SK-N-SH (cell line): ENCODE measurements at regions of chr6 and their contacts with region 1.

Region 1: GRCh38 chr6:18503593-18504231 is 116.6 kb downstream of the RNF144B start:
- DNase-seq: peak; percentile 52
- H3K4me3 ChIP-seq: peak overlapping the region; percentile 9 to 19; a peak in 2 of 4 replicates
- H3K27ac ChIP-seq: no peak overlapping the region; a peak in 1 of 4 replicates
- H3K4me1 ChIP-seq: peaks cover 4 to 6% of the 10 kb centered on the region in 2 experiments; a peak in 2 of 4 replicates
- H3K27me3 ChIP-seq: no peaks in the 10 kb centered on the region
- CTCF ChIP-seq: peak; percentile 94
- EP300 ChIP-seq: no peak
- RAD21 ChIP-seq: peak; percentile 98

Region 2: DNA sequence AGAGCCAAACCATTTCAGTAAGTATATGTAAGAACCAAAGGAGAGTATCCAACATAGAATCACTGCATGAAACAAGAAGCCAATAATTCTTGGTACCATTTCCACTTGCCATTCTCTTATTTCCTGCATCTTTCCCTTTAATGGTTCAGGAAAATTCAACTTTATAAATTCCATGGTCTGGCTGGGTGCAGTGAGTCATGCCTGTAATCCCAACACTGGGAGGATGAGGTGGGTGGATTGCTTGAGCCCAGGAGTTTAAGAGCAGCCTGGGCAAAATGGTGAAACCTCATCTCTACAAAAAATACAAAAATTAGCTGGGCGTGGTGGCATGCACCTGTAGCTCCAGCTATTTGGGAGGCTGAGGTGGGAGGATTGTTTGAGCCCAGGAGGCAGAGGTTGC is 402.4 kb before region 1 on chr6:
- CTCF ChIA-PET with region 1: no interaction called
- POLR2A ChIA-PET with region 1: no interaction called
- DNase-seq: no peak
- H3K4me3 ChIP-seq: no peak overlapping the region
- H3K27ac ChIP-seq: no peak overlapping the region
- H3K4me1 ChIP-seq: no peaks in the 10 kb centered on the region
- H3K27me3 ChIP-seq: no peaks in the 10 kb centered on the region
- CTCF ChIP-seq: no peak
- EP300 ChIP-seq: no peak
- RAD21 ChIP-seq: no peak

Region 3: GRCh38 chr6:18317850-18318249 is 185.9 kb before region 1 on chr6:
- CTCF ChIA-PET with region 1: interaction called, 32 read pairs
- POLR2A ChIA-PET with region 1: no interaction called
- DNase-seq: no peak
- H3K4me3 ChIP-seq: no peak overlapping the region
- H3K27ac ChIP-seq: no peak overlapping the region
- H3K4me1 ChIP-seq: no peaks in the 10 kb centered on the region
- H3K27me3 ChIP-seq: no peaks in the 10 kb centered on the region
- CTCF ChIP-seq: no peak
- EP300 ChIP-seq: no peak
- RAD21 ChIP-seq: no peak

Region 4: GRCh38 chr6:18323935-18324705 is 179.6 kb before region 1 on chr6:
- CTCF ChIA-PET with region 1: interaction called, 32 read pairs
- POLR2A ChIA-PET with region 1: no interaction called
- DNase-seq: peak; percentile 64
- H3K4me3 ChIP-seq: no peak overlapping the region; a peak in 1 of 4 replicates
- H3K27ac ChIP-seq: no peak overlapping the region
- H3K4me1 ChIP-seq: no peaks in the 10 kb centered on the region
- H3K27me3 ChIP-seq: no peaks in the 10 kb centered on the region
- CTCF ChIP-seq: peak; percentile 81
- EP300 ChIP-seq: no peak
- RAD21 ChIP-seq: peak; percentile 77

Region 5: GRCh38 chr6:18561037-18561750 is 57.5 kb after region 1 on chr6:
- CTCF ChIA-PET with region 1: no interaction called
- POLR2A ChIA-PET with region 1: no interaction called
- DNase-seq: peak; percentile 30
- H3K4me3 ChIP-seq: no peak overlapping the region
- H3K27ac ChIP-seq: peak overlapping the region in 1 of 2 experiments; percentile 39; a peak in 1 of 4 replicates
- H3K4me1 ChIP-seq: peaks cover 0 to 2% of the 10 kb centered on the region in 2 experiments; a peak in 2 of 4 replicates
- H3K27me3 ChIP-seq: no peaks in the 10 kb centered on the region; the same call in 1 of the 2 replicates
- CTCF ChIP-seq: no peak
- EP300 ChIP-seq: peak in 1 of 2 experiments; percentile 47; a peak in 2 of 4 replicates
- RAD21 ChIP-seq: no peak